Ascending aorta (tissue), 2 donors: ENCODE measurements at regions of chr12 and their contacts with region 1.

Region 1: DNA sequence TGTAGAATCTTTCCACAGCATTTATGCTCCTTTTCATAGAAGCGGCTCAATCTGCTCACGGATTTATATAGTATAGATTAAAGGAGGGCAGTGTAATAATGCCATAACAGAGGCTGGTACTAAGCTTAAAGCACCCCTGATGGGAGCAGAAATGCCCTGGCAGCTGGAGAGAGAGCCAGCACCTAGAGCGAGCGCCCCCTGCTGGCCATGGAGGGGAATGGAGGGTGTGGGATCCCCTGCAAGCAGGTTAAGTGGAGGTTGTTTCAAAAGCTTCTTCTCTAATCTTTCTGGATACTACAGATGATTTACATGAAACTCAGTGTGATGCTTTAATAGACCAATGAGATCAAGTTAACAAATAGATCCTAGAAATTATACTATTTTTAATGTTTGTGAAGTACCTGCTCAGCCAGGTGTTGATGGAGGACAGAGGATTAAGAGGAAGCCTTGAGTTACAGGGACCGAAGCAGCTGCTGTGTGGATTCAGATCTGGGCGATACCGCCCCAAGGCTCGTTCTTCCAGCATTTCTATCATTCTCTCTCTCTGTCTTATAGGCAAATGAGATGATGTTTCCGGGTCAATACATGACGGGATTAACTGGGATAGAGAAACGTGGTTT is 1519.3 kb upstream of the TMEM132C start:
- DNase-seq: no peak
- H3K4me3 ChIP-seq: no peak overlapping the region
- H3K27ac ChIP-seq: no peak overlapping the region
- H3K4me1 ChIP-seq: no peaks in the 10 kb centered on the region
- H3K27me3 ChIP-seq: no peaks in the 10 kb centered on the region
- CTCF ChIP-seq: peak; percentile 47 to 84 (median 76)

Region 2: GRCh38 chr12:125533434-125534029 is 1214.1 kb before region 1 on chr12:
- intact Hi-C with region 1: loop called (anchors 5 kb)
- DNase-seq: no peak
- H3K4me3 ChIP-seq: no peak overlapping the region
- H3K27ac ChIP-seq: no peak overlapping the region
- H3K4me1 ChIP-seq: no peaks in the 10 kb centered on the region
- H3K27me3 ChIP-seq: no peaks in the 10 kb centered on the region
- CTCF ChIP-seq: peak; percentile 27 to 66 (median 36)

Region 3: GRCh38 chr12:126454581-126454980 is 293.1 kb before region 1 on chr12:
- intact Hi-C with region 1: no loop called
- DNase-seq: no peak
- H3K4me3 ChIP-seq: no peak overlapping the region
- H3K27ac ChIP-seq: peak overlapping the region in 1 of 2 donors; percentile 64
- H3K4me1 ChIP-seq: no peaks in the 10 kb centered on the region
- H3K27me3 ChIP-seq: no peaks in the 10 kb centered on the region
- CTCF ChIP-seq: no peak